CD8-positive, alpha-beta T cell (primary cell): ENCODE measurements at regions of chr9 and their contacts with region 1.

Region 1: GRCh38 chr9:34376596-34377403 is at the start of gene MYORG:
- DNase-seq: peak; percentile 93 to 98 (median 95)
- ATAC-seq: peak; percentile 73
- H3K4me3 ChIP-seq: peak within 1 kb of the TSS; percentile 77 to 82
- H3K4me3 Mint-ChIP-seq: peak within 1 kb of the TSS; percentile 93
- H3K27ac ChIP-seq: peak within 1 kb of the TSS; percentile 9 to 55
- H3K27ac Mint-ChIP-seq: peak within 1 kb of the TSS; percentile 89
- H3K4me1 ChIP-seq: peaks cover 36% of the 10 kb centered on the region
- H3K4me1 Mint-ChIP-seq: peaks cover 47% of the 10 kb centered on the region
- H3K27me3 ChIP-seq: no peaks in the 10 kb centered on the region
- H3K27me3 Mint-ChIP-seq: no peaks in the 10 kb centered on the region
- CTCF ChIP-seq: no peak
- total RNA-seq, gene MYORG: 0.39 to 0.60 TPM

Region 2: GRCh38 chr9:33816327-33817252 is 560.2 kb before region 1 on chr9 and contains the start of gene UBE2R2:
- CTCF ChIA-PET with region 1: no interaction called
- POLR2A ChIA-PET with region 1: no interaction called
- intact Hi-C with region 1: loop called in 1 of 2 experiments (anchors 2 kb)
- DNase-seq: peak; percentile 86 to 98 (median 91)
- ATAC-seq: peak; percentile 79
- H3K4me3 ChIP-seq: peak within 1 kb of the TSS; percentile 85 to 93
- H3K4me3 Mint-ChIP-seq: peak within 1 kb of the TSS; percentile 89
- H3K27ac ChIP-seq: peak within 1 kb of the TSS; percentile 92 to 94
- H3K27ac Mint-ChIP-seq: peak within 1 kb of the TSS; percentile 98
- H3K4me1 ChIP-seq: peaks cover 23% of the 10 kb centered on the region
- H3K4me1 Mint-ChIP-seq: peaks cover 50% of the 10 kb centered on the region
- H3K27me3 ChIP-seq: no peaks in the 10 kb centered on the region
- H3K27me3 Mint-ChIP-seq: no peaks in the 10 kb centered on the region
- CTCF ChIP-seq: no peak
- total RNA-seq, gene UBE2R2: 20.0 to 20.1 TPM

Region 3: DNA sequence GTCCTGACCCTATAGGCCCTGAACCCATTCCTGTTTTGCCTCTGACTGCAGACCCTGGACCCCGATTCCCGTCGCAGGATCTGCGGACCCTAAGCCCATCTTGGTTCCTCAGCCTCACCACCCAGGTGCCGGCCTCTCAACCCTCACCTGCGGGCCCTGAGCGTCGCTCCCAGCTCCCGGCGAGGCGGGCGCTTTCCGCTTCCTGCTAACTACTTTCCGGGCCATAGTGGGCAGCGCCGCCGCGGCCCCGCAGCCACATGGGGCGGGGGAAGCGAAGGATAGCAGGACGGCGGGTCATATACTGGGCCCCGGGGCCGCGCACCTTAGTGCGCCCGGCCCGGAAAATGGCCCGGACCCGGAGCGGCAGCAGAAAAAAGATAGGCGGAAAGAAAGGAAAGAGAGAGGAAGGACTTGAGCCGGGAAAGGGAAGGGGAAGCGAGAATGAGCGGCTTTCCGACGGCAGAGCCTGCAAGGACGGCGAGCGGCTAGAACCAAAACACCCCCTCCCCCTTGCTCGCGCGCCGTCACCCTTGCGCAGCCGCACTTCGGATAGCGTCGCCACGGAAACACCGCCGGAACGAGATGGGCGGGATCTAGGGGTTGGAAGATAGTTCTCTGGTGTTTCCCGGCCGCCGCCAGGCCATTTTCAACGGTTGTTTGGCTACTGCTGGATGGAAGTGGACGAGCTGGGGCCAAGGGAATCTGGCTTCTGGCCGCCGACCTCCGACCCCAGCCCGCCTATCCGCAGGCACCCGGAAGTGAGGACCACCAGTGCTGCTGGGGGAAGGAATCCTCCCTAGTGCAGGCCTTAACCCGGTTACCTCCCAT is 250.4 kb before region 1 on chr9 and contains the start of gene DCAF12:
- CTCF ChIA-PET with region 1: no interaction called
- POLR2A ChIA-PET with region 1: interaction called, 3 read pairs
- intact Hi-C with region 1: loop called (anchors 1 kb)
- DNase-seq: peak; percentile 82 to 96 (median 90)
- ATAC-seq: peak; percentile 96
- H3K4me3 ChIP-seq: peak within 1 kb of the TSS; percentile 89 to 96
- H3K4me3 Mint-ChIP-seq: peak within 1 kb of the TSS; percentile 98
- H3K27ac ChIP-seq: peak within 1 kb of the TSS; percentile 79 to 92
- H3K27ac Mint-ChIP-seq: peak within 1 kb of the TSS; percentile 97
- H3K4me1 ChIP-seq: peaks cover 39% of the 10 kb centered on the region
- H3K4me1 Mint-ChIP-seq: peaks cover 49% of the 10 kb centered on the region
- H3K27me3 ChIP-seq: no peaks in the 10 kb centered on the region
- H3K27me3 Mint-ChIP-seq: no peaks in the 10 kb centered on the region
- CTCF ChIP-seq: no peak
- total RNA-seq, gene DCAF12: 4.0 to 4.1 TPM

Region 4: DNA sequence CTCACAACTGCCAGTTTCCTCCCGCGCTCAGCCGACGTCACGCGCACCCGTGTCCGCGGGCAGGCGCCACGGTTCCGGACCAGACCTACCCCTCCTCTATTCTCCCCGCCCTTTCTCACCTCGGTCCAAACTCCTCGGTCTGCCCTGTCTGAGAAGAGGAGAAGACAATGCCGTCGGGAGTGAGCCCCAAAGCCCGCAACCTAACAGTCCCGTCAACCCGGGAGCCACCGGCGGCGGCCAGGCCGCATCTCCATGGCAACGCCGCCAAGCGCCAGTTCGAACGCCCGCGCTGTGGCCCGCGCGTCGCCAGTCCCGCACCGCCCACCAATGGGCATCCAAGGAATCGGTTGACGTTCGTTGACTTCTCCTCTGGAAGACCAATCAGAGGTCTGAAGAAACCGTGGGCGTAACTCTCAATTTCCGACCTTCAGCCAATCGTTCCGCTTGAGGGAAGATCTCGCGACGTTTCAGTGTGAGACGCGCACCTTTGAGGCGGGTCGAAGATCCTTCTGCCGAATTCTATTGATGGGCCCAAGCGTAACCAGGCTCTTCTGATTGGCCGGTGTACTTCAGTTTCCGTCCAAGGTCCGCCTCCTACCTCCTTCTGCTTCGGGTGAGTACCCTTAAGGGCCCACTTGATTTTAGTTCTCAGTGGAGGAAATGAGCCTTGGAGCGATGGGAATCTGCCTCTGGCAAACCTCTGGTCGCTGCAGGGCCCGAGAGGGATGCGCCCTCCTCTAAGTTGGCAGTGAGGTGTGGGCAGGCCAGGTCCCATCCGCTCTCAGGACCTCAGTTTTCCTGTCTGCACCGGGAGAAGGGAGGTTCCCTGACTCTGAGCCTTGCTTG is 47.6 kb before region 1 on chr9 and contains the starts of genes KIF24 and NUDT2:
- CTCF ChIA-PET with region 1: interaction called, 77 read pairs
- POLR2A ChIA-PET with region 1: interaction called, 4 read pairs
- intact Hi-C with region 1: loop called (anchors 1 kb)
- DNase-seq: peak; percentile 86 to 100 (median 93)
- ATAC-seq: peak; percentile 91
- H3K4me3 ChIP-seq: peak within 1 kb of the TSS; percentile 95 to 96
- H3K4me3 Mint-ChIP-seq: peak within 1 kb of the TSS; percentile 90
- H3K27ac ChIP-seq: peak within 1 kb of the TSS; percentile 92 to 93
- H3K27ac Mint-ChIP-seq: peak within 1 kb of the TSS; percentile 92
- H3K4me1 ChIP-seq: no peaks in the 10 kb centered on the region
- H3K4me1 Mint-ChIP-seq: peaks cover 23% of the 10 kb centered on the region
- H3K27me3 ChIP-seq: no peaks in the 10 kb centered on the region
- H3K27me3 Mint-ChIP-seq: no peaks in the 10 kb centered on the region
- CTCF ChIP-seq: no peak
- total RNA-seq, gene KIF24: 0.08 to 0.14 TPM
- total RNA-seq, gene NUDT2: 9.7 to 10.2 TPM

Region 5: GRCh38 chr9:34611829-34612630 is 235.2 kb after region 1 on chr9 and contains the start of gene RPP25L:
- CTCF ChIA-PET with region 1: interaction called, 3 read pairs
- POLR2A ChIA-PET with region 1: no interaction called
- intact Hi-C with region 1: loop called in 1 of 2 experiments (anchors 2 kb)
- DNase-seq: peak; percentile 65 to 92 (median 85)
- ATAC-seq: peak; percentile 95
- H3K4me3 ChIP-seq: peak within 1 kb of the TSS; percentile 88 to 93
- H3K4me3 Mint-ChIP-seq: peak within 1 kb of the TSS; percentile 85
- H3K27ac ChIP-seq: peak within 1 kb of the TSS; percentile 77 to 91
- H3K27ac Mint-ChIP-seq: peak within 1 kb of the TSS; percentile 91
- H3K4me1 ChIP-seq: peaks cover 17% of the 10 kb centered on the region
- H3K4me1 Mint-ChIP-seq: peaks cover 23% of the 10 kb centered on the region
- H3K27me3 ChIP-seq: no peaks in the 10 kb centered on the region
- H3K27me3 Mint-ChIP-seq: no peaks in the 10 kb centered on the region
- CTCF ChIP-seq: no peak
- total RNA-seq, gene RPP25L: 4.4 to 5.1 TPM

Region 6: DNA sequence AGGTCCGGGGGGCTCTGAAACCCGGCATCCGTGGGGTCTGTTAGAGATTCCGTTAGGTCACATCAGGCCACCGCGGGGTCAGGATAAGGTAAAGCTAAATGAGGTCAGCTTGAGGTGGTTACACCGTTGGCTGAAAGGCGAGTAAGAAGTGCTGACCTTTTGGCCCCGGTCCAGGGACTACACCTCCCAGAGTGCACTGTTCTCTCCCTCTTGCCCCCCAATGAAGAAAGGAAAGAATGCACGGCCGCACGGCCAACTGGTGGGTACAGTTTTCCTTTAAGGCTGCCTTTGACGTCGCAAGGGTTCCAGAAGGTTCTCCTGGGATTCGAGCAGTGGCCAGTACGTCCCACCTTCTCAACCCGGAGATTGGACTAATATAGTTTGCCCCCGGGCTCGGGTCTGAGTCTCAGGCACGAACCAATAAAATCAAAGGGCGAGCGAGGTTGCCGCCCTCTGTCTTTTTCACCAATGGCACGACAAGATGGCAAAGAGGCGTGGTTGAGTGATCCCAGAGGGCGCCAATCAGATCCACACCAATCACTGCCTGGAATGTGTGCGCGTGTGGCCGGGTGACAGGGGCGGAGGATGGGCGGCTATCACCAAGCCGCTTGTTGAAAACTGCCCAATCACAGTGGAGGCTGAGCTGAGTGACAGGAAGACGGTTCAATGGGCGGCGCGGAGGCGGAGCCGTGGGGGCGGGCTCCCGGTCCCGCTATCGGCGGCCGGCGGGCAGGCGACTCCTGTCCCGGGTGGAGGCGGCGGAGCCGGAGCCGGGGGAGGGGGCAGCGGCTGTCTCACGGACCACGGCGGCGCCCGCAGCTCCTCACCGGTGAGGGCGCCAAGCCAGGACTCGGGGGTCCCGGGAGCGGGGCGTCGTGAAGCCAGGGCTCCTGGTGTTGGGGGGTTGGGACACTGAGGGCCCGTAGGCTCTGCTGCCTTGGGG is 612.5 kb after region 1 on chr9 and contains the start of gene DNAJB5:
- CTCF ChIA-PET with region 1: no interaction called
- POLR2A ChIA-PET with region 1: no interaction called
- intact Hi-C with region 1: loop called in 1 of 2 experiments (anchors 5 kb)
- DNase-seq: peak; percentile 94 to 99 (median 96)
- ATAC-seq: peak; percentile 89
- H3K4me3 ChIP-seq: peak within 1 kb of the TSS; percentile 88 to 95
- H3K4me3 Mint-ChIP-seq: peak within 1 kb of the TSS; percentile 93
- H3K27ac ChIP-seq: peak within 1 kb of the TSS; percentile 42 to 77
- H3K27ac Mint-ChIP-seq: peak within 1 kb of the TSS; percentile 76
- H3K4me1 ChIP-seq: peaks cover 42% of the 10 kb centered on the region
- H3K4me1 Mint-ChIP-seq: peaks cover 46% of the 10 kb centered on the region
- H3K27me3 ChIP-seq: no peaks in the 10 kb centered on the region
- H3K27me3 Mint-ChIP-seq: no peaks in the 10 kb centered on the region
- CTCF ChIP-seq: no peak
- total RNA-seq, gene DNAJB5: 2.1 to 2.2 TPM

Region 7: GRCh38 chr9:35705836-35706430 is 1329.1 kb after region 1 on chr9:
- CTCF ChIA-PET with region 1: no interaction called
- POLR2A ChIA-PET with region 1: no interaction called
- intact Hi-C with region 1: no loop called
- DNase-seq: no peak
- ATAC-seq: no peak
- H3K4me3 ChIP-seq: no peak overlapping the region
- H3K4me3 Mint-ChIP-seq: no peak overlapping the region
- H3K27ac ChIP-seq: no peak overlapping the region
- H3K27ac Mint-ChIP-seq: no peak overlapping the region
- H3K4me1 ChIP-seq: no peaks in the 10 kb centered on the region
- H3K4me1 Mint-ChIP-seq: no peaks in the 10 kb centered on the region
- H3K27me3 ChIP-seq: no peaks in the 10 kb centered on the region
- H3K27me3 Mint-ChIP-seq: no peaks in the 10 kb centered on the region
- CTCF ChIP-seq: no peak